HCT116 (cell line): ENCODE measurements at regions of chr12 and their contacts with region 1.

Region 1: GRCh38 chr12:1690578-1691122 is at the start of gene ADIPOR2:
- DNase-seq: peak; percentile 91
- ATAC-seq: peak; percentile 97
- H3K4me3 ChIP-seq: peak within 1 kb of the TSS; percentile 80 to 83
- H3K27ac ChIP-seq: peak within 1 kb of the TSS; percentile 84
- H3K4me1 ChIP-seq: peaks cover 12 to 15% of the 10 kb centered on the region in 2 experiments
- H3K27me3 ChIP-seq: no peaks in the 10 kb centered on the region
- CTCF ChIP-seq: no peak
- POLR2A ChIP-seq: peak; percentile 91
- RAD21 ChIP-seq: no peak
- total RNA-seq, gene ADIPOR2: 69.9 TPM

Region 2: GRCh38 chr12:1661553-1662335 is 28.9 kb before region 1 on chr12:
- CTCF ChIA-PET with region 1: interaction called, 3 read pairs
- POLR2A ChIA-PET with region 1: interaction called, 8 read pairs
- RAD21 ChIA-PET with region 1: no interaction called
- intact Hi-C with region 1: loop called (anchors 2 kb)
- DNase-seq: peak; percentile 89
- ATAC-seq: peak; percentile 91
- H3K4me3 ChIP-seq: peak overlapping the region in 1 of 2 experiments; percentile 11; a peak in 1 of 4 replicates
- H3K27ac ChIP-seq: peak overlapping the region; percentile 46; the same call in 1 of the 2 replicates
- H3K4me1 ChIP-seq: peaks cover 0 to 28% of the 10 kb centered on the region in 2 experiments; a peak in 2 of 4 replicates
- H3K27me3 ChIP-seq: no peaks in the 10 kb centered on the region
- CTCF ChIP-seq: no peak
- POLR2A ChIP-seq: peak; percentile 61
- RAD21 ChIP-seq: no peak